ENCODE measurements at regions of chr11 and their contacts with region 1.

Region 1: GRCh38 chr11:107573438-107573837 is 7.9 kb upstream of the ALKBH8 start:
- DNase-seq: no peak
- H3K4me3 Mint-ChIP-seq: no peak overlapping the region
- H3K27ac Mint-ChIP-seq: no peak overlapping the region
- H3K4me1 Mint-ChIP-seq: peaks cover 4% of the 10 kb centered on the region
- H3K27me3 Mint-ChIP-seq: peaks cover 1% of the 10 kb centered on the region

Region 2: GRCh38 chr11:107898270-107898669 is 324.8 kb after region 1 on chr11:
- CTCF ChIA-PET with region 1: interaction called, 5 read pairs
- POLR2A ChIA-PET with region 1: no interaction called
- intact Hi-C with region 1: loop called (anchors 1 kb)
- DNase-seq: no peak
- H3K4me3 Mint-ChIP-seq: no peak overlapping the region
- H3K27ac Mint-ChIP-seq: no peak overlapping the region
- H3K4me1 Mint-ChIP-seq: no peaks in the 10 kb centered on the region
- H3K27me3 Mint-ChIP-seq: peaks cover 3% of the 10 kb centered on the region

Measured in activated CD4-positive, alpha-beta memory T cell treated with anti-CD3 and anti-CD28 coated beads for 36 hours (primary cell).